Adrenal gland (tissue), 19 donors: ENCODE measurements at regions of chr10 and their contacts with region 1.

Region 1: GRCh38 chr10:80382989-80383388 is 25.4 kb upstream of the PRXL2A start:
- DNase-seq: peak in 6 of 7 donors; percentile 25 to 73 (median 46)
- H3K4me3 ChIP-seq: no peak overlapping the region
- H3K27ac ChIP-seq: no peak overlapping the region
- H3K4me1 ChIP-seq: peaks cover 0 to 6% of the 10 kb centered on the region in 2 donors
- H3K27me3 ChIP-seq: no peaks in the 10 kb centered on the region
- CTCF ChIP-seq: peak; percentile 33 to 77 (median 63)
- POLR2A ChIP-seq: no peak

Region 2: DNA sequence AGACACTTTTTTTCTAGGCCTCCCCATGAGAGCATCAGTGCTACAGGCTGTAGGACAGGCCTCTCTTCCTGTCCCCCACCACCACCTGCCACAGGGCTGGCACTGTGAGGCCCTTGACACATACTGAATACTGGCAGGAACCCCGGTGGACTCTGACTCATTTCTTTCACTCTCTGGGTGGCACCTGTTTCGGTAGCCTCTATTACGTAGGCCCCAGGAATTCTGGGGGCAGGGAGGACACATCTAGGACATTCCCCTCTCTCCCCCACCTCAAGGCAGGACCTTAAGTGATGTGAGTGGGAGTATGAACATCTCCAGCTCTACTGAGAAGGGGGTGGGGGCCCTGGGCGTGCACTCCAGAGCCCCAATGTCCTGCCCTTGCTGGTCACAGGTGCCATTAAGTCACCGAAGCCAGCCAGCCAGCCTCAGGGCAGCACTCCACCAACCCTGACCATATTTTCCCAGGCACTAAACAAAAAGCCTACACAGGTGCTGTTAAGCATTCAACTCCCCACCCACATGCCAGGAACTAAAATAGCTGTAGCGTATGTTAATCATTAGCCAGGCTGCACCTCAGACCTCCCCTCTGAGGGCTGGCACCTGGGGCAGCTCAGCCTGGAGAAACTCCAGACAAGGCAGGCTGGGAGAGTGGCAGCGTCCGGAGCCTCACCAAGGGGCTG is 186.6 kb before region 1 on chr10:
- intact Hi-C with region 1: no loop called
- DNase-seq: peak in 5 of 7 donors; percentile 44 to 72 (median 58)
- H3K4me3 ChIP-seq: no peak overlapping the region
- H3K27ac ChIP-seq: peak overlapping the region in 1 of 5 donors; percentile 49
- H3K4me1 ChIP-seq: peaks cover 4 to 38% of the 10 kb centered on the region in 2 donors
- H3K27me3 ChIP-seq: no peaks in the 10 kb centered on the region
- CTCF ChIP-seq: no peak
- POLR2A ChIP-seq: no peak

Region 3: GRCh38 chr10:80500572-80501380 is 117.8 kb after region 1 on chr10:
- intact Hi-C with region 1: loop called (anchors 10 kb)
- DNase-seq: peak in 2 of 7 donors; percentile 26 to 54
- H3K4me3 ChIP-seq: no peak overlapping the region
- H3K27ac ChIP-seq: peak overlapping the region in 4 of 5 donors; percentile 8 to 98 (median 88)
- H3K4me1 ChIP-seq: peaks cover 38 to 81% of the 10 kb centered on the region in 2 donors
- H3K27me3 ChIP-seq: no peaks in the 10 kb centered on the region
- CTCF ChIP-seq: no peak
- POLR2A ChIP-seq: no peak